ENCODE measurements at regions of chr6 and their contacts with region 1.

Region 1: DNA sequence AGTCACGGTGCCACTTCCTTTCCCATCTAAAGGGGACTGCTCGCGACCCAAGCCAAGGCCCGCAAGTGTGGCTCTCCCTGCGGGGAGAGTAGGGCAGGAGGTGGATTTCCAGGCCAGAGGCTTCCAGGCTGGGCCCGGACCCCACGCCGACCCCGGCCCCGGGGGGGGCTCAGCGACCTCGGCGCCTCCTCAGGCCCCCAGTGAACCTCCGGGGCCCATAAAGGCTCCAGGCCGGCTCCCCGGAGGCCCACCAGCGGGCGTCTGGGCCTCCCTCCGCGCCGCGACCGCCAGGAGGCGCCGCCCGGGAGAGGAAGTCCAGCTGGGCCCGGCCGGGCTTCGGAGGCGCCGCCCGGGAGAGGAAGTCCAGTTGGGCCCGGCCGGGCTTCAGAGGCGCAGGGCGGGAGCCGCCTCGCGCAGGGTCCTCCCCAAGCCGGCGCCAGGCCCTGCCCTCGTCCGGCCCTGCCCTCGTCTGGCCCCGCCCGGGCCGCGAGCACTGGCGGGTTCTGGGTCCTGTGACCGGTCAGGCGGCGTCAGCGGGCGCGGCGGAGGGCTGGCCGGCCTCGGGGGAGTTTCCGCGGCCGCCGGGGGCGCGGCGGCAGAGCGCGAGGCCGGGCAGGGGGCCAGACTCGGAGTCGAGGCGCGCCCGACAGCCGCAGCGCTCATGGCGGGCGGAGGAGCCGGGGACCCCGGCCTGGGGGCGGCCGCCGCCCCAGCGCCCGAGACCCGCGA is at the start of gene RAB32:
- DNase-seq: peak; percentile 95
- ATAC-seq: peak; percentile 96
- H3K4me3 ChIP-seq: peak within 1 kb of the TSS; percentile 76
- H3K27ac ChIP-seq: peak within 1 kb of the TSS; percentile 89
- H3K4me1 ChIP-seq: peaks cover 4% of the 10 kb centered on the region; the same call in 1 of the 2 replicates
- H3K27me3 ChIP-seq: no peaks in the 10 kb centered on the region
- CTCF ChIP-seq: peak; percentile 69
- POLR2A ChIP-seq: peak; percentile 70
- RAD21 ChIP-seq: peak; percentile 53
- total RNA-seq, gene RAB32: 104 and 108 TPM in 2 replicates

Region 2: GRCh38 chr6:145814501-145815308 is 728.7 kb before region 1 on chr6 and contains the start of gene FBXO30:
- CTCF ChIA-PET with region 1: no interaction called
- POLR2A ChIA-PET with region 1: no interaction called
- dilution Hi-C with region 1: no loop called
- in situ Hi-C with region 1: no loop called
- intact Hi-C with region 1: loop called (anchors 10 kb)
- DNase-seq: peak; percentile 80
- ATAC-seq: peak; percentile 86
- H3K4me3 ChIP-seq: peak within 1 kb of the TSS; percentile 99
- H3K27ac ChIP-seq: peak within 1 kb of the TSS; percentile 93
- H3K4me1 ChIP-seq: peaks cover 6% of the 10 kb centered on the region
- H3K27me3 ChIP-seq: no peaks in the 10 kb centered on the region
- CTCF ChIP-seq: no peak
- POLR2A ChIP-seq: peak; percentile 90
- RAD21 ChIP-seq: no peak
- total RNA-seq, gene FBXO30: 9.3 and 15.3 TPM in 2 replicates

Region 3: DNA sequence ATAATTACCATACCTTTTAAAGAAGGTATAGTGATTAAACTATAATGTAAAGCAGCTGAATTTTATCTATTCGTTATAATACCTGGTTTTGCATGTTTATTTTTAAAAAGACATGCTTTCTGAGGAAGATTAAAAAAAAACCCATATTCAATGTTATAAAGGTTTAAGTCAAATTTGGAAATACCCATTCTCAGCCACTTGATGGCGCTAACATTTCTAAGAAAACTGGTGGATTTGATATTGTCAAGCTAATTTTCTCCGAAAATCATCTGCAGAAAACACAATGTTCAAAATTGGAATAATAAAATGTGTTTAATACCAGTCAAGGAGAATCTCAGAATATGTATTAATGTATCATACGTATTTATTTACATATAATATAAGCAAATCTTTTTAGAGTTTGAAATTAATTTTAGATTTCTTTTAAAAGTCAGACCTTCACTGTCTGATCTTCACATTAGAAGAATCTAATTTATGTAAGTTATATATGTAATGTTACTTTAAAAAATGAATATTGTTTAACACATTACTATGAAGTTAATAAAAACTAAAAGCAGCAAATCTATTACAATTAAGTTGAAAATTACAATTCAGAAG is 614.2 kb before region 1 on chr6:
- CTCF ChIA-PET with region 1: no interaction called
- POLR2A ChIA-PET with region 1: no interaction called
- dilution Hi-C with region 1: no loop called
- in situ Hi-C with region 1: no loop called
- intact Hi-C with region 1: loop called (anchors 10 kb)
- DNase-seq: peak; percentile 60
- ATAC-seq: peak; percentile 21; the same call in 1 of the 2 replicates
- H3K4me3 ChIP-seq: no peak overlapping the region
- H3K27ac ChIP-seq: no peak overlapping the region
- H3K4me1 ChIP-seq: no peaks in the 10 kb centered on the region
- H3K27me3 ChIP-seq: no peaks in the 10 kb centered on the region
- CTCF ChIP-seq: peak; percentile 64
- POLR2A ChIP-seq: no peak
- RAD21 ChIP-seq: peak; percentile 54

Region 4: GRCh38 chr6:145963216-145964068 is 579.9 kb before region 1 on chr6:
- CTCF ChIA-PET with region 1: no interaction called
- POLR2A ChIA-PET with region 1: no interaction called
- dilution Hi-C with region 1: no loop called
- in situ Hi-C with region 1: loop called (anchors 10 kb)
- intact Hi-C with region 1: loop called (anchors 5 kb)
- DNase-seq: peak; percentile 43
- ATAC-seq: peak; percentile 43
- H3K4me3 ChIP-seq: peak overlapping the region; percentile 78
- H3K27ac ChIP-seq: peak overlapping the region; percentile 88
- H3K4me1 ChIP-seq: peaks cover 4% of the 10 kb centered on the region; the same call in 1 of the 2 replicates
- H3K27me3 ChIP-seq: no peaks in the 10 kb centered on the region
- CTCF ChIP-seq: no peak
- POLR2A ChIP-seq: no peak
- RAD21 ChIP-seq: no peak

Region 5: DNA sequence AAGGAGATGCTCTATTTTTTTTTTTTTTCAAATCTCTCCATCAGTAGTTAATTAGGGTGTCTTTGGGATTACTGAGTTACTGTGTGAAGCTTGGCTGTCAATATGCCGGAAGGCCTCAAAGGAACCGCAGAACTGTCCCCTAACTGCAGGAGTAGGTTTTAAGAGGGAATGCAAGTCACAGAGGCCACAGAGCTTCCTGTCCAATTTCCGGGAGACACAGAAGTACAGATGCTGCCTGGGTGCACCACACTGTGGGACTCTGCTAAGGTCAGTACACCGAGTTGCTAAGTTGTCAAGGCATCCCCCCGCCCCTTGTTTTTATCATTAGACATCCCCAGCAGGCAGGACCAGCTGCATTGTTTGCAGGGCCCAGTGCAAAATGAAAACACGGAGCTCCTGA is 119.9 kb before region 1 on chr6:
- CTCF ChIA-PET with region 1: no interaction called
- POLR2A ChIA-PET with region 1: no interaction called
- dilution Hi-C with region 1: no loop called
- in situ Hi-C with region 1: no loop called
- intact Hi-C with region 1: no loop called
- DNase-seq: no peak
- ATAC-seq: no peak
- H3K4me3 ChIP-seq: no peak overlapping the region
- H3K27ac ChIP-seq: no peak overlapping the region
- H3K4me1 ChIP-seq: no peaks in the 10 kb centered on the region
- H3K27me3 ChIP-seq: no peaks in the 10 kb centered on the region
- CTCF ChIP-seq: no peak
- POLR2A ChIP-seq: no peak
- RAD21 ChIP-seq: no peak

Region 6: DNA sequence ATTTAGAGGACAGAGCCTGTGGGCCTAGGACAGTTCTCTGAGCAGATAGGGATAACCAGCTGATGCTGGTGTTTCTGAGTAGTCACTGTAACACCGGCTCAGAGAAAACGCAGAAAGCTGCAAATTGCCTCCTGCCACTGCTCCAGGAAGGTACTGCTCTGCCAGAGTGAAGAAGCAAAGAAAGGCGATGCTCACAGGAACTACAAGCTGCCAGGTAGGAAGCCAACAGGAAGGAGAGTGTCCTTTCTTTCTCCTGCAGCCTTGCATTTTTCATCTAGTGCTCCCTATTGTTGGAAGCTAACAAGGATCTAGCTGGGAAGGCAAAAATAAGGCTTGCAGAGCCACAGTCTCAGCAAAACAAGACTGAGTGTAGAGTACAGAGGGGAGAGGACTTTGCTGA is 70.5 kb before region 1 on chr6:
- CTCF ChIA-PET with region 1: no interaction called
- POLR2A ChIA-PET with region 1: no interaction called
- dilution Hi-C with region 1: no loop called
- in situ Hi-C with region 1: no loop called
- intact Hi-C with region 1: no loop called
- DNase-seq: no peak
- ATAC-seq: no peak
- H3K4me3 ChIP-seq: no peak overlapping the region
- H3K27ac ChIP-seq: no peak overlapping the region
- H3K4me1 ChIP-seq: no peaks in the 10 kb centered on the region
- H3K27me3 ChIP-seq: no peaks in the 10 kb centered on the region
- CTCF ChIP-seq: no peak
- POLR2A ChIP-seq: no peak
- RAD21 ChIP-seq: no peak

Measured in IMR-90 (cell line).